Motor neuron (in vitro differentiated cells): ENCODE measurements at regions of chr4 and their contacts with region 1.

Region 1: DNA sequence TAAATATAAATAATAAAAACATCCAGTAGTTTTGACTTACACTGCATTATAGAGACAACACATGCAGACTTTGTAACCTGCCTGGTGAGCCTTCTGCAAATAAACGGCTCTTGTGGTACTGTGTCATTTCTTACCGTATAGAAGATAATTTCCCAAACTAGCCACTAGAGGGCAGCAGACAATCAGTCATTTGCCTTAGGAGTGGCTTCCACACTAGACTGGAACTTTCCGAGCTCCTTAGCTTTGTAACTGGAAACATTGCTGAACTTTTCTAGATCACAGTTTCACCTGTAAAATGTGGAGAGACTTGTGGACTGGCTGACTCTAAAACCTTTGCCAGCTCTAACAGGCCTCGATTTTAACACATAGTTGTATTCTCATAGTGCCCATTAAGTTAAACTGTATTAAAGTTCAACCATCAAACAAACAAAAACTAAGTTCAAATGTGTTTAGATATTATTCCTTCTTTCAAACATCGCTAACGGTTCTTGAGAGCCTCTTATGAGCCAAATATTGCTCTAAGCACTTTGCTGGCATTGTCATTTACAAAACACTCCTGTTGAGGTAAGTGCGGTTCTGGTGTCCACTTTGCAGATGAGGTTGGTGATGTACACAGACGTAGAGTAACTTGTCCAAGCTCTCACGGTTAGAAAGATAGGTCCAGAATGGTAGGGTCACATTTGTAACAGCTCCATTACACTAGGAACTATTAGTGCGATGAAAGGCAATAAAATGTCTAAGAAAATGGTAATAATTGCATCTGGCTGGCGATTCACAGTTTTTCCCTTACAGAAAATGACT is 345.5 kb downstream of the ANK2 start:
- ATAC-seq: peak; percentile 90 to 100 (median 98)
- H3K4me3 ChIP-seq: no peak overlapping the region
- H3K27ac ChIP-seq: no peak overlapping the region
- H3K4me1 ChIP-seq: no peaks in the 10 kb centered on the region

Region 2: DNA sequence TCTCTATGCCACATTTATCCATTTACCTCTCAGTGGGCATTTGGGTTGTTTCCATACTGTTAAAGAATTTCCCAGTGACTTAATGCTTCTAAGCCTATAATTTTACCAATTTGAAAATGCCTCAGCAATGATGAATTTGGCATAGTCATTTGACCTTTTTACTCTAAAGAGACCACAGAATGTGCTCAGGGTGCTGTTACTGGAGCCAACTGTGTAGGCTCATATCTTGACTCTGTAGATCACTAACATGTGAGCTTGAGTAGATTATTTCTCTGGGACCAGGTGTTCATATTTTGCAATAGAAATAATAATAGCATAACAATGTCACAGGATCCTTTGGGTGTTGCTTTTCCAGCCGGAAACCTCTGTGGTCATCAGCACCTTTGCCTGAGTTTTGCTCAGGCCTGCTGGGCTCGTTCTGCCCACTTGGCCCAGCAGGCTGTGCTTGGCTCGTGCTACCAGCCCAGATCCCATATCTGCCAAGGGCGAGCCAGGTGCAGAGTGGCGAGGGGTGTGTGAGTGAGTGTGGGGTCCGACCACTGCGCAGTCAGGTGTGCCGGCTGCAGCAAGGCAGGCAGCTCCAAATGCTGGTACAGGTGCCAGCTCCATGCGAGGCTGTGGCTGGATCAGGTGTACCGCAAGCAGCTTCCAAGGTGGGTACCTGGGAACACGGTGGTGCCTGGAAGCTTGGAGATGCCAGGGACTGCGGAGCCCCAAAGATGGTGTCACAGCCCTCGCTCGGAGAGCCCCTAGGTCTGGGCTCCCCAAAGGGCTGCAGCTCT is 416.0 kb before region 1 on chr4:
- in situ Hi-C with region 1: no loop called
- ATAC-seq: no peak
- H3K4me3 ChIP-seq: no peak overlapping the region
- H3K27ac ChIP-seq: no peak overlapping the region
- H3K4me1 ChIP-seq: peaks cover 4 to 24% of the 10 kb centered on the region in 2 donors

Region 3: GRCh38 chr4:113106108-113106507 is 288.8 kb before region 1 on chr4:
- in situ Hi-C with region 1: loop called in 1 of 9 experiments (anchors 25 kb)
- ATAC-seq: peak in 3 of 8 experiments; percentile 52 to 69 (median 66)
- H3K4me3 ChIP-seq: no peak overlapping the region
- H3K27ac ChIP-seq: no peak overlapping the region
- H3K4me1 ChIP-seq: peaks cover 0 to 26% of the 10 kb centered on the region in 2 donors

Region 4: GRCh38 chr4:113761620-113762185 is 366.8 kb after region 1 on chr4 and contains the start of gene CAMK2D:
- in situ Hi-C with region 1: loop called in 2 of 9 experiments (anchors 10 to 25 kb)
- ATAC-seq: peak; percentile 40 to 79 (median 76)
- H3K4me3 ChIP-seq: peak within 1 kb of the TSS; percentile 53 to 81 (median 66)
- H3K27ac ChIP-seq: peak within 1 kb of the TSS; percentile 91 to 95
- H3K4me1 ChIP-seq: peaks cover 3 to 9% of the 10 kb centered on the region in 2 donors
- total RNA-seq, gene CAMK2D: 14.5 to 77.2 (median 33.5) TPM

Region 5: GRCh38 chr4:113945906-113946305 is 551.0 kb after region 1 on chr4:
- in situ Hi-C with region 1: loop called in 1 of 9 experiments (anchors 25 kb)
- ATAC-seq: no peak
- H3K4me3 ChIP-seq: no peak overlapping the region
- H3K27ac ChIP-seq: no peak overlapping the region
- H3K4me1 ChIP-seq: no peaks in the 10 kb centered on the region

Region 6: GRCh38 chr4:114386637-114387233 is 991.8 kb after region 1 on chr4:
- in situ Hi-C with region 1: loop called in 4 of 9 experiments (anchors 10 to 25 kb)
- ATAC-seq: peak in 4 of 8 experiments; percentile 30 to 55 (median 38)
- H3K4me3 ChIP-seq: no peak overlapping the region
- H3K27ac ChIP-seq: no peak overlapping the region
- H3K4me1 ChIP-seq: no peaks in the 10 kb centered on the region

Region 7: DNA sequence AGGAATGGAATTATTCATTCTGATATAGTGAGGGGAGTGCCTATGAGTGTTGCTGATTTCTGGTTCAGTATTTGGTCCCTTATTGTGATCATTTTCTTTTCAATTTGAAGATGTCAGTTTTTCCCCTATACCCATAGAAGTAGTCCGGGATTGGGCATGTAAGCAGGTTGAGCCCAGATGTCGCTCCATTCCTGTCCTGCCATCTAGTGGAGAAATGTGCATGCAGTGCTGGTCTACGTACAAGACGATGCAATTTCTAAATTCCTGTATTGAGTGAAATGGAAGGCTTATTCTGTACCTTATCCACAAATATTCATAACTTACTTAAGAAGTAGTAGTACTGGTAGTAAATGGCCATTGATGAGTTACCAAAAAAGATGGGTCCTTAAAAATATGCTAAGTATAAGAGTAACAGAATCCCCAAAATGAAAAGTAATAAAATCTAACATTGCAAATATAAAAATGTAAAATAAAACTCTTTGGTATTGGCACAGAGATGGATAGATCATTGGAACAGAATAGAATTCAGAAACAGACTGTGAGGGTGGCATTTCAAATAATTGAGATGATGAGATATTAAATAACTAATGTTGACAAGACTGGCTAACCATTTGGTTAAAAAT is 1264.6 kb after region 1 on chr4:
- in situ Hi-C with region 1: loop called in 1 of 9 experiments (anchors 25 kb)
- ATAC-seq: peak; percentile 75 to 99 (median 93)
- H3K4me3 ChIP-seq: no peak overlapping the region
- H3K27ac ChIP-seq: no peak overlapping the region
- H3K4me1 ChIP-seq: no peaks in the 10 kb centered on the region

Region 8: DNA sequence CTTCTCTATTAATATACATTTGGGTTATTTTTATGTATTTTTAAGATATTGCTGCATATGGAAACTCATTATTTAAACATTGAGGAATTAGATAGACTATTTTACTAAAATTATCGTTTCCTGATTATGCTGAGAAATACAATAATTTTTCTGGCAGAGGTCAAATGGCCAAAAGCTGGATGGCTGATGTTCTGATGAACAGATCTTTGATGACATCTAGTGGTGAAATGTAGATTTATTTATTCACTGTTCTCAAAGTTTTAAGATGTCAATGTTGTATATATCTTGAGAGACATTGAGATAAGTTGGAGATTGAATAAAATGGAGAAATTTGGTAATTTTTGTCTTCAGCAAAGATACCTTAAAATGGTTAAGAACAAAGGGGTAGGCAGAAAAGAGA is 1299.8 kb after region 1 on chr4:
- in situ Hi-C with region 1: loop called in 1 of 9 experiments (anchors 25 kb)
- ATAC-seq: no peak
- H3K4me3 ChIP-seq: no peak overlapping the region
- H3K27ac ChIP-seq: no peak overlapping the region
- H3K4me1 ChIP-seq: peaks cover 0 to 2% of the 10 kb centered on the region in 2 donors